ENCODE measurements at regions of chr2 and their contacts with region 1.

Region 1: DNA sequence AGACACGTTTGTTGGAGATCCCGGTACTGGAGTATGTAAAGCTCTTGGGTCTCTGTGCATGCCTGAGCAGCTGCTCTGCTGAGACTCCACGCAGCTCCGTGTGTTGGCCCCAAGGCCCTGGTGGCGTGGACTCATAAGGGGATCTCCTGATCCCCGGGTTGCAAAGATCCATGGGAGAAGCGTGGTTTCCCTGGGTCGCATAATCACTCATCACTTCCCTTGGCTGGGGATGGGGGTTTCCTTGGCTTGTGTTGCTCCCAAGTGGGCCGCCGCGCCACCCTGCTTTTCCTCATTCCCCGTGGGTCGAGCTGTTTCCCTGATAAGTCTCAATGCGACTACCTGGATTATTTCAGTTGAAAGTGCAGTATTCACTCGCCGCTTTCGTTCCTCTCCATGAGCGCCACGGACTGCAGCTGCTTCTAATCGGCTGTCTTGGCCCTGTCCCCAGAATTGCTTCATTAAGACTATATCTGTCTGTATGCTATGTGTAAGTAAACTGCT is 76.0 kb downstream of the EPC2 start:
- DNase-seq: peak; percentile 62
- H3K4me3 ChIP-seq: peak overlapping the region in 2 of 4 donors; percentile 14 to 27
- H3K27ac ChIP-seq: peak overlapping the region in 2 of 4 donors; percentile 10 to 32
- H3K4me1 ChIP-seq: peaks cover 0 to 27% (median 23%) of the 10 kb centered on the region in 4 donors
- H3K27me3 ChIP-seq: no peaks in the 10 kb centered on the region
- CTCF ChIP-seq: no peak
- EP300 ChIP-seq: no peak
- POLR2A ChIP-seq: no peak

Region 2: DNA sequence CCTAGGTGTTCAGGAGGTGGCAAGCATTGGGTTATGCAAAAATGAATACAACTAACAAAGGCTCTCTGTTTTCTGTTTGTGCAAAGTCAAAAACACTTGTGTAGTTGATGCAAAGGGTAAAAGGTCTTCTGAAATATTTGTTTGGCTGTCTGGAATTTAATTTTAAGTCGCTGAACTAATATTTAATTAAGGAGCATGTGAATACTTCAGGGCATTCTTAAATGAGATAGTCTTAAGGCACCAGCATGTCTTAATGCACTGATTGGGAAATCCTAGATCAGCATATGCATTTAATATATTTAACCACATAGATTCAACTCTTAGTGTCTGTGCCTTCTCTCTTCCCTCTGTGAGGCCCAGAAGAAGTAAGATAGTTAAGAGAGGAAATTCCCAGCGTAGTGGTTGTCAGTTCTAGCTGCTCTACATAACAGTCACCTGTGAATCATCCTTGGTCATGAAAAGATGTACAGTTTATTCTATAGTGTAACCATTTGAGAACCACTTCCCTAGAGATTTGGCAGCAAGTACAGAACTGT is 35.9 kb after region 1 on chr2:
- intact Hi-C with region 1: no loop called
- DNase-seq: no peak
- H3K4me3 ChIP-seq: no peak overlapping the region
- H3K27ac ChIP-seq: no peak overlapping the region
- H3K4me1 ChIP-seq: no peaks in the 10 kb centered on the region
- H3K27me3 ChIP-seq: no peaks in the 10 kb centered on the region
- CTCF ChIP-seq: no peak
- EP300 ChIP-seq: no peak
- POLR2A ChIP-seq: no peak

Region 3: GRCh38 chr2:148813603-148814065 is 93.1 kb after region 1 on chr2:
- intact Hi-C with region 1: loop called (anchors 5 kb)
- DNase-seq: no peak
- H3K4me3 ChIP-seq: no peak overlapping the region
- H3K27ac ChIP-seq: peak overlapping the region in 2 of 4 donors; percentile 25 to 69
- H3K4me1 ChIP-seq: peaks cover 0 to 57% (median 47%) of the 10 kb centered on the region in 4 donors
- H3K27me3 ChIP-seq: no peaks in the 10 kb centered on the region
- CTCF ChIP-seq: no peak
- EP300 ChIP-seq: no peak
- POLR2A ChIP-seq: no peak